ENCODE measurements at regions of chr12 and their contacts with region 1.

Region 1: GRCh38 chr12:76790564-76791552 is 26.9 kb downstream of the ZDHHC17 start:
- DNase-seq: peak; percentile 40
- CTCF ChIP-seq: peak; percentile 37

Region 2: DNA sequence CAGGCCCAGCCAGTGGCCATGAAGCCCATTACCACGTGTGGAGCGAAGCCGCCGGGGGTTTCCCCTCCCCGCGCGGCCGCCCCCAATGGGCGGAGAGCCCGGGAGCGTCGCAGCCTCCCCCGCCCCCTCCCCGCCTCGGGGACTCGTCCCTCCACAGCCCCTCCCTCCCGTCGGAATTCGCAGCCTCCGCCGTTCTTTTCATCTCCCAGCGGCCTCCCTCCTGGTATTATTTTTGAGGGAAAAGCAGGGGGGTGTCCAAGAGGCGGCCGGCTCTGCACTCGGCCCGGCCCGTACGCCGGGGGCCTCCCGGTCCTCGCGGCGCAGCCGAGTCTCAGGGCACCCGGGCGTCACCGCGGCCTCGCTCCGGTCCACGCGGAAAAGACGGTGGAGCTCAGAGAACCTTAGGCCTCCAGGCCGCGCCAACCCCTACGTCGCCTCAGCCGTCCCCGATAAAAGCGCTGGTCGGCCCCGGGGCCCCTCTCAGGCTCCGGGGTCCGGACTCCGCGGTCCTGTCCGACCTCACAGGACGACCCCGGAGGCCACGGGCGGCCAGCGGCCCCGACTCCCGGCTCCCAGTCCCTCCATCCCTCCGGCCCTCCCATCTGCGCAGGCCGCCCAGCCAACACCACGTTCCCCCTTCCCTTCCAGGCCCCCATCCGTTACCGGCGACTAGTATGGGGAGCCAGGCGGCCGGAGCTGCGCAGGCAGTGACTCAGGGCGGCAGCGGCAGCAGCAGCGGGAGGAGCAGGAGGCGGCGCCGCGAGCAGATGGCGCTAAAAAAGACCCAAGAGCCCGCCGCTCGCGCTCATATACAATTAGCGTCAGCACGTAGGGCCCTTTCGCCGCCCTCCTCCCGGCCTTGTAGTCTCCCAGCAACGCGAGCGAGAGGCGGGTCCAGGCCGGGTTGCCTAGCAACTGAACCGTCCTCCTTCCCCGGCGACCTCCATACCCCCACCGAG is 706.7 kb before region 1 on chr12 and contains the start of gene NAP1L1:
- in situ Hi-C with region 1: loop called (anchors 25 kb)
- DNase-seq: peak; percentile 97
- CTCF ChIP-seq: peak; percentile 4

Region 3: GRCh38 chr12:76621582-76622024 is 169.3 kb before region 1 on chr12:
- in situ Hi-C with region 1: loop called (anchors 10 kb)
- DNase-seq: peak; percentile 57
- CTCF ChIP-seq: peak; percentile 86

Region 4: DNA sequence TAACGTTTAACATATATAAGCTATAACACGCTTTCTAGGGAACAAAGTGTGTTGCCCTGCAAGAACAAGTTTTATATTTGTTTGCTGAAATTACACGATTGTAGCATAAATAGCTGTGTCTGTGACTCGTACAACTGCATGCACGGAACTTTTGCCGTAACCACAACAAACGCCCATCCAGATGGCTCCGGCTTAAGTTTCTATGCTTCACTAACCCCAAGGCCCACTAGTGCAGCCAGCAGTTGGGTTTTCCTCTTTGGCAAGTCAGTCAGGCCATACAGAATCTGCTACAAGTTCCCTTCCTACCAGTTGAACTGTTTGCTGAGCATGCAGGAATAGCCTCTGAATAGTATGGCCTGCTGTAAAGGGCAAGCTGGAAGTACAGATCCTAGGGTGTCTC is 75.9 kb after region 1 on chr12:
- in situ Hi-C with region 1: no loop called
- DNase-seq: no peak
- CTCF ChIP-seq: no peak

Region 5: GRCh38 chr12:76927170-76927784 is 136.4 kb after region 1 on chr12:
- in situ Hi-C with region 1: no loop called
- DNase-seq: peak; percentile 58
- CTCF ChIP-seq: peak; percentile 36